ENCODE measurements at regions of chr17 and their contacts with region 1.

Region 1: DNA sequence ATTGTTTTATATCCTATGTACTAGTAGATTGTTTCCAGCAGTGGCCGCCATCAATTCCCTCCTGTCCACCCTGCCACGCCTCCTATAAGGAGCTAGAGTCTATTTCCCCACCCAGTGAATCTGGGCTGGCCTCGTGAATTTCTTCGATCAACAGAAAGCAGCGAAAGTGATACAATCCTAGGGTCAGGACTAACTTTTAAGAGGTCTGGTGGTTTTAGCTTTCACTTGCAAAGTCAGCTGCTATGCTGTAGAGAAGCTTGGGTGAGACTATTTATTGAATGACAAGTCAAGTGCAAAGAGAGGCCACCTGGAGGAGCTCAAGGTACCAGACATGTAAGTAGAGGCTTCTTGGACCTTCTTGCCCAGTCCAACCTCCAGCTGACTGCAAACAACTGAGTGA is 80.9 kb upstream of the MTMR4 start:
- DNase-seq: no peak
- H3K4me3 ChIP-seq: no peak overlapping the region
- H3K27ac ChIP-seq: no peak overlapping the region
- H3K4me1 ChIP-seq: no peaks in the 10 kb centered on the region
- H3K27me3 ChIP-seq: peaks cover 2% of the 10 kb centered on the region
- CTCF ChIP-seq: no peak

Region 2: DNA sequence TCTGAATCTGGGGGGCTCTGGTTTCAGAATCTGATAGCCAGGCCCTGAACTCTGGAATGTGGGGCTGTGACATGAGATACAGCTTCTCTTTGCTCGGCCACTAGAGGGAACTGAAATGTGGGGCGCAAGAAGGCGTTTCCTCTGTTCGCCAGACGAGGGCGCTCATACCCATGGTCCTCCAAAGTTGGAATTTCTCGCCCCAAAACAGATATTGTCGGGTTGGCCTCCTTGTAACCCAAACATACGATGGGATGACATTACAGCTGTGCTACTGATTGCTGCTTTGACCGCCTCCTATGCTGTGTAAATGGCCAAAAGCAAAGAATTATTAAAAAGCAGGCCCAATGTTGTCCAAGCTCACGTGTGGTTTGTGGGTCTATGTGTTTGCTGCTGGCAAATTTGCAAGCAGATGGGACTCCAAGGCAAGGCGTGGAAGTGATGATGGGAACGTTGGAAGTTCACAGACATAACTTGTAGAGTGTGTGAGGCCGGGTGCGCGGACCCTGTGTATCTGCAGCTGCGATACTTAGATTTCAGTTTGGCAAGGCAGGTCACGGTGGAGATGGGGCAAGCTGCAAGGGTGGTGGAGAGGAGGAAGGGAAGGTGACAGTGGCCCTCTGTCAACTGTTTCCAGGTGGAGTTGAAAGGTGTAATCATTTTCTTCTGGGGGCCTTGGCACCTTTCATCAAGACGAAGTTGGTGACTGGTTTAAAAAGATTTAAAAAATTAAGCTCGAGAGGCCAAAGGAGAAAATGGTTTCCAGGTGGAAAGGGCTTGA is 1352.0 kb before region 1 on chr17:
- CTCF ChIA-PET with region 1: no interaction called
- dilution Hi-C with region 1: no loop called
- in situ Hi-C with region 1: no loop called
- intact Hi-C with region 1: no loop called
- DNase-seq: peak; percentile 45
- H3K4me3 ChIP-seq: no peak overlapping the region
- H3K27ac ChIP-seq: no peak overlapping the region
- H3K4me1 ChIP-seq: no peaks in the 10 kb centered on the region
- H3K27me3 ChIP-seq: no peaks in the 10 kb centered on the region
- CTCF ChIP-seq: peak; percentile 100

Region 3: DNA sequence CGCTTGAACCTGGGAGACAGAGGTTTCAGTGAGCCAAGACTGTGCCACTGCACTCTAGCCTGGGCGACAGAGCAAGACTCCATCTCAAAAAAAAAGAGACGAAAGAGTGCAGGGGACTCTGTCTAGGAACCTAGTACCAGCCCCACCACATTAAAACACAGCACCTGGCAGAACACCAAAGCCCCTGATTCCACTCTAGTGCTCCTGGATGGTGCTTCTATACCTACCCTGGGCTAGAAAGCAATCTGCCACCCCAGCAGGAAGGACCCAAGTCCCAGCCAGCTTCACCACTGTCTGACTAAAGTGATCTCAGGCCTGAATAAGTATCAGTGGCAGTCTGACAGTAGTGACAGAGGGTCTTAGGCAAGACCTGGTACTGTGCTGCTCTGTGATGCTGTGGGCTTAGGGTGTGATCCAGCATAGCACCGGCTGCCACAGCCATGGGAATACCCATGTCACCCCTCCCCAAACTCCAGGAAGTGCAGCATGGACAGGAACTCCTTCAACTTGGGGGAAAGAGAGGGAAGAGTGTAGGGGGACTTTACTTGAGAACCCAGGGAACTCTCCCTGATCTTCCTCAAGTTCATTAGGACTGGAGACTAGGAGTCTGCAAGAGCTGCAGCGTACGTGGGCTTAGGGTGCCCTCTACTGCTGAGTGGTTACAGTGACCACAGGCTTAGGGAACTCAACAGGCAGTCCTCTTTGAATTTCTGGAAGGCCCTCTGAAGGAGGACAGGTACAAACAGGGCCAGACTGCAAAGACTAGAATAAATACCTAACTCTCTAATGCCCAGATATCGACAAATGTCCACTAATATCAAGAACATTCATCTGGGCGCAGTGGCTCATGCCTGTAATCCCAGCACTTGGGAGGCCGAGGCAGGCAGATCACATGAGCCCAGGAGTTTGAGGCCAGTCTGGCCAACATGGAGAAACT is 148.0 kb before region 1 on chr17:
- CTCF ChIA-PET with region 1: no interaction called
- dilution Hi-C with region 1: no loop called
- in situ Hi-C with region 1: no loop called
- intact Hi-C with region 1: no loop called
- DNase-seq: peak; percentile 68
- H3K4me3 ChIP-seq: no peak overlapping the region
- H3K27ac ChIP-seq: no peak overlapping the region
- H3K4me1 ChIP-seq: no peaks in the 10 kb centered on the region
- H3K27me3 ChIP-seq: no peaks in the 10 kb centered on the region
- CTCF ChIP-seq: peak; percentile 79 to 96

Region 4: GRCh38 chr17:58517734-58518609 is 77.4 kb before region 1 on chr17:
- CTCF ChIA-PET with region 1: no interaction called
- dilution Hi-C with region 1: no loop called
- in situ Hi-C with region 1: no loop called
- intact Hi-C with region 1: no loop called
- DNase-seq: peak; percentile 100
- H3K4me3 ChIP-seq: peak overlapping the region; percentile 67 to 93 (median 76)
- H3K27ac ChIP-seq: peak overlapping the region; percentile 72
- H3K4me1 ChIP-seq: peaks cover 17% of the 10 kb centered on the region
- H3K27me3 ChIP-seq: no peaks in the 10 kb centered on the region
- CTCF ChIP-seq: no peak

Region 5: GRCh38 chr17:58556833-58557250 is 38.5 kb before region 1 on chr17:
- CTCF ChIA-PET with region 1: no interaction called
- dilution Hi-C with region 1: no loop called
- in situ Hi-C with region 1: no loop called
- intact Hi-C with region 1: no loop called
- DNase-seq: no peak
- H3K4me3 ChIP-seq: no peak overlapping the region
- H3K27ac ChIP-seq: no peak overlapping the region
- H3K4me1 ChIP-seq: no peaks in the 10 kb centered on the region
- H3K27me3 ChIP-seq: no peaks in the 10 kb centered on the region
- CTCF ChIP-seq: no peak

Region 6: GRCh38 chr17:58679263-58680037 is 84.1 kb after region 1 on chr17:
- CTCF ChIA-PET with region 1: no interaction called
- dilution Hi-C with region 1: loop called (anchors 5 kb)
- in situ Hi-C with region 1: no loop called
- intact Hi-C with region 1: no loop called
- DNase-seq: peak; percentile 97
- H3K4me3 ChIP-seq: no peak overlapping the region
- H3K27ac ChIP-seq: peak overlapping the region; percentile 83
- H3K4me1 ChIP-seq: no peaks in the 10 kb centered on the region
- H3K27me3 ChIP-seq: no peaks in the 10 kb centered on the region
- CTCF ChIP-seq: no peak

Region 7: GRCh38 chr17:58985971-58986370 is 390.6 kb after region 1 on chr17:
- CTCF ChIA-PET with region 1: no interaction called
- dilution Hi-C with region 1: loop called (anchors 10 kb)
- in situ Hi-C with region 1: no loop called
- intact Hi-C with region 1: no loop called
- DNase-seq: no peak
- H3K4me3 ChIP-seq: no peak overlapping the region
- H3K27ac ChIP-seq: no peak overlapping the region
- H3K4me1 ChIP-seq: no peaks in the 10 kb centered on the region
- H3K27me3 ChIP-seq: no peaks in the 10 kb centered on the region
- CTCF ChIP-seq: no peak

Measured in mammary epithelial cell (primary cell).